Activated CD4-positive, alpha-beta memory T cell treated with anti-CD3 and anti-CD28 coated beads, Interleukin-2, amount 10 ng/mL, durations not matched to agents 7 days and 5 days (primary cell): ENCODE measurements at regions of chr4 and their contacts with region 1.

Region 1: GRCh38 chr4:83110223-83110945 is 4.1 kb downstream of the PLAC8 start:
- DNase-seq: peak; percentile 91
- H3K4me3 Mint-ChIP-seq: peak overlapping the region; percentile 84
- H3K27ac Mint-ChIP-seq: peak overlapping the region; percentile 89
- H3K4me1 Mint-ChIP-seq: peaks cover 57% of the 10 kb centered on the region
- H3K27me3 Mint-ChIP-seq: peaks cover 3% of the 10 kb centered on the region

Region 2: GRCh38 chr4:83034630-83035494 is 75.5 kb before region 1 on chr4 and contains the start of gene COPS4:
- CTCF ChIA-PET with region 1: interaction called, 7 read pairs
- POLR2A ChIA-PET with region 1: interaction called, 21 read pairs
- DNase-seq: peak; percentile 97
- H3K4me3 Mint-ChIP-seq: peak within 1 kb of the TSS; percentile 95
- H3K27ac Mint-ChIP-seq: peak within 1 kb of the TSS; percentile 99
- H3K4me1 Mint-ChIP-seq: peaks cover 31% of the 10 kb centered on the region
- H3K27me3 Mint-ChIP-seq: peaks cover 11% of the 10 kb centered on the region
- total RNA-seq, gene COPS4: 30.9 to 32.8 TPM

Region 3: DNA sequence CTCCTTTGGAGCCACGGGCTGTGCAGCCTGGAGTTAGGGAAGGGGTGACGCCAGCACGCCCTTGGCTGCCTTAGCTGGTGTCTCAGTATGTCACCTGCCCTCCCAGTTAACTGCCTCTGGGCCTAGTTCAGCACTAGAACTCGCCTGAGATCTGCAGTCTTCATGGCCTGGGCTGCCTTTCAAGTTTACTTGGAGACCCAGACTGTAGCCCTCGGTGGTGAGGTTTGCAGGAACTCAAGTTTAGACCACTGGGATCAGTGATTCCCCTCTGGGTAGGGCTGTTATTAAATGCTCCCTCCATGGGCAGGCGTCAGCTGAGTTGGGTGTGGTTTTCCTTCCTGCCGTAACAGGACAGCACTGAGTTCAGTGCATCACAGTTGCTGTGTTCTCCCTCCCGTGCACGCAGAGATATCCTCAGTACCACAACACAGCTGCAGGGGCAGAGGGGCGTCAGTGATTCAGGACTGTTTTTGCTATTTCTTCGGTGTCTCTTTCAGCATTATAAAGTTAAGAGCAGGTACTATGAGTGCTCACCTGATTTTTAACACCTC is 26.4 kb before region 1 on chr4:
- CTCF ChIA-PET with region 1: interaction called, 44 read pairs
- POLR2A ChIA-PET with region 1: interaction called, 32 read pairs
- DNase-seq: peak; percentile 78
- H3K4me3 Mint-ChIP-seq: peak overlapping the region; percentile 16
- H3K27ac Mint-ChIP-seq: peak overlapping the region; percentile 78
- H3K4me1 Mint-ChIP-seq: peaks cover 31% of the 10 kb centered on the region
- H3K27me3 Mint-ChIP-seq: no peaks in the 10 kb centered on the region

Region 4: GRCh38 chr4:83124111-83124780 is 13.9 kb after region 1 on chr4:
- CTCF ChIA-PET with region 1: interaction called, 35 read pairs
- POLR2A ChIA-PET with region 1: interaction called, 30 read pairs
- DNase-seq: no peak
- H3K4me3 Mint-ChIP-seq: no peak overlapping the region
- H3K27ac Mint-ChIP-seq: no peak overlapping the region
- H3K4me1 Mint-ChIP-seq: peaks cover 27% of the 10 kb centered on the region
- H3K27me3 Mint-ChIP-seq: peaks cover 20% of the 10 kb centered on the region

Region 5: GRCh38 chr4:83252782-83253405 is 142.5 kb after region 1 on chr4:
- CTCF ChIA-PET with region 1: interaction called, 24 read pairs
- POLR2A ChIA-PET with region 1: interaction called, 6 read pairs
- DNase-seq: peak; percentile 77
- H3K4me3 Mint-ChIP-seq: no peak overlapping the region
- H3K27ac Mint-ChIP-seq: no peak overlapping the region
- H3K4me1 Mint-ChIP-seq: peaks cover 21% of the 10 kb centered on the region
- H3K27me3 Mint-ChIP-seq: peaks cover 16% of the 10 kb centered on the region